ENCODE measurements at regions of chr19 and their contacts with region 1.

Region 1: DNA sequence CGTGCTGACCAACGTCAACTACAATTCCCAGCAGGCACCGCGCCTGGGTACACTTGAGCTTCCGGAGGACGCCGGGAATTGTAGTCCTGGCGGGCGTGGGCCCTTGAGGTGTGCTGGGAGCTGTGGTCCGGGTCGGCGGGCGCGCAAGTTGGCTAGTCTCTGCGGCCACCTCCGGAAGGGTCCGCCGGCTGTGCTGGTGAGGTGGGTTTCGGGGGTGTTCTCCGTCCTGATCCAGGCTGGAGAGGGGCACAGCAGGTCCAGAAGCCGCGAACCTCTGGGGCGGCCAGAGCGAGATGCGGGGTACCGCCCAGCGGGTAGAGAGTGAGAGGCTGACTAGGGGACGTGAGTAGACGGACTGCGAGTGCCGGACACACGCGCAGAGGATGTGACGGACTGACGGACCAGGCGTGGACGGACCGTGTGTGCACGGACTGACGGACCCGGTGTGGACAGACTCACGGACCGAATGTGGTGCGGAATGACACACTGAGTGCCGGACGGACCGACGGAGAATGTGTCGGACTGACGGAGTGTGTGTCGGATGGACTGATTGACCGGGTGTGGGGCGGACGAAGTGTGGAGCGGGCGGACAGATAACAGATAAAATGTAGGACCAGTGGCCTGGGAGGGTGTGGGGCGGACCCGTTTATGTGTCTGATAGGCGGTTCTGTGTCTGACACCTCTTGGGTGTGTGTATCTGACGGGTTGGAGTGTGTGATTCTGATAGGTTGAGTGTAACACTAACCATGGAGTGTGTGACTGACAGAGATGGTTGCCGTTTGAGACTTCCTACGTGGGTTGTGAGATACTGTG is at the start of gene ZSCAN22:
- DNase-seq: peak; percentile 97
- H3K4me3 ChIP-seq: peak within 1 kb of the TSS; percentile 56 to 100 (median 86)
- H3K27ac ChIP-seq: peak within 1 kb of the TSS; percentile 65
- H3K4me1 ChIP-seq: peaks cover 28% of the 10 kb centered on the region
- H3K27me3 ChIP-seq: no peaks in the 10 kb centered on the region
- CTCF ChIP-seq: no peak
- total RNA-seq, gene ZSCAN22: 3.2 to 3.7 TPM

Region 2: DNA sequence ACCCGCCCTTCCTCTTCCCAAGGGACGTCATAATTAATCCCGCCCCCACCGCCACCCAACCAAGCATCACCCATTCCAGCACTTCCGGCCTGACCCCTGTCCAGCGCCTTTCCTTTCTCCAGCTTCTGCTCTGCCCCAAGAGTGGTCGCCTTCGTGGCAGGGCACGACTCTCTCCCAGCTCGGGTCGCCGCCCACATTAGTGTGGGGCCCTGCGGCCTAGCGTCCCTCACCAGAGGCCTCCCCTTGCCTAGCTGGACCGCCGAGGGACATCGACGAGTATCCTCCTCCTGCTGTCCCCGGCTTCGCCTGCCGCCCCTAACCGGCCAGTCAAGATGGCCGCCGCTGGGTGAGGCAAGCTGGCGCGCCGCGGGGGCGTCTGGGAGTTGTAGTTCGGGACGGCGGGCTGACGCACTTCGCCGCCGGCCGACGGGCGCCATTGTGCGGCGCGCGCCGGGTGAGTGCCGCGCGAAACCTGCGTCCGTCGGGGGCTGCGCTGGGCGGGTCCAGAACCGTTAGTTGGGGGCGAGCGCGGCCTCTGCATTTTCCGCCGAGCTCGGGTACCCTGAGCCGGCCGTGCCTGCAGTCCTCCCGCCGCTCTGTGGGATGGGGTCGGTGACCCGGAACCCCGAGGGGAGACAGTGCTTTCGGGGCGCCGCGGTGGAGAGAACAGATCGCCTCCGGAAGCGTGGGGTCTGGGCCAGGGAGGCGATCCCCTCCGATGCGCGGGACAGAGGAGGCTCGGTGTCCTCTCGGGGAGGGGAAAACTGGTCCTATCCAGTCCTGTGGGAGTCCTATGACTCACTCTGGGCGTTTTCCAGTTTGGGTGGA is 143.9 kb before region 1 on chr19 and contains the start of gene ZNF274:
- CTCF ChIA-PET with region 1: no interaction called
- dilution Hi-C with region 1: no loop called
- in situ Hi-C with region 1: no loop called
- intact Hi-C with region 1: loop called (anchors 5 kb)
- DNase-seq: peak; percentile 90
- H3K4me3 ChIP-seq: peak within 1 kb of the TSS; percentile 81 to 97 (median 83)
- H3K27ac ChIP-seq: peak within 1 kb of the TSS; percentile 93
- H3K4me1 ChIP-seq: peaks cover 3% of the 10 kb centered on the region
- H3K27me3 ChIP-seq: no peaks in the 10 kb centered on the region
- CTCF ChIP-seq: no peak
- total RNA-seq, gene ZNF274: 15.7 to 33.8 TPM

Region 3: GRCh38 chr19:58278157-58279041 is 48.7 kb before region 1 on chr19 and contains the start of gene ZNF8:
- CTCF ChIA-PET with region 1: no interaction called
- dilution Hi-C with region 1: no loop called
- in situ Hi-C with region 1: no loop called
- intact Hi-C with region 1: loop called (anchors 2 kb)
- DNase-seq: peak; percentile 99
- H3K4me3 ChIP-seq: peak within 1 kb of the TSS; percentile 73 to 93 (median 82)
- H3K27ac ChIP-seq: peak within 1 kb of the TSS; percentile 80
- H3K4me1 ChIP-seq: peaks cover 10% of the 10 kb centered on the region
- H3K27me3 ChIP-seq: no peaks in the 10 kb centered on the region
- CTCF ChIP-seq: peak in 1 of 2 donors; percentile 16
- total RNA-seq, gene ZNF8: 6.0 to 10.2 TPM

Region 4: GRCh38 chr19:58362272-58362994 is 35.3 kb after region 1 on chr19 and contains the start of gene ZNF497:
- CTCF ChIA-PET with region 1: no interaction called
- dilution Hi-C with region 1: no loop called
- in situ Hi-C with region 1: no loop called
- intact Hi-C with region 1: loop called (anchors 2 kb)
- DNase-seq: peak; percentile 94
- H3K4me3 ChIP-seq: peak within 1 kb of the TSS; percentile 61 to 83 (median 64)
- H3K27ac ChIP-seq: peak within 1 kb of the TSS; percentile 84
- H3K4me1 ChIP-seq: peaks cover 8% of the 10 kb centered on the region
- H3K27me3 ChIP-seq: no peaks in the 10 kb centered on the region
- CTCF ChIP-seq: no peak
- total RNA-seq, gene ZNF497: 0.83 to 1.1 TPM

Region 5: GRCh38 chr19:58386576-58387337 is 59.6 kb after region 1 on chr19 and contains the start of gene RPS5:
- CTCF ChIA-PET with region 1: no interaction called
- dilution Hi-C with region 1: no loop called
- in situ Hi-C with region 1: no loop called
- intact Hi-C with region 1: loop called (anchors 1 kb)
- DNase-seq: peak; percentile 98
- H3K4me3 ChIP-seq: peak within 1 kb of the TSS; percentile 72 to 86 (median 85)
- H3K27ac ChIP-seq: peak within 1 kb of the TSS; percentile 82
- H3K4me1 ChIP-seq: peaks cover 28% of the 10 kb centered on the region
- H3K27me3 ChIP-seq: no peaks in the 10 kb centered on the region
- CTCF ChIP-seq: no peak
- total RNA-seq, gene RPS5: 916 to 1,060 TPM

Region 6: DNA sequence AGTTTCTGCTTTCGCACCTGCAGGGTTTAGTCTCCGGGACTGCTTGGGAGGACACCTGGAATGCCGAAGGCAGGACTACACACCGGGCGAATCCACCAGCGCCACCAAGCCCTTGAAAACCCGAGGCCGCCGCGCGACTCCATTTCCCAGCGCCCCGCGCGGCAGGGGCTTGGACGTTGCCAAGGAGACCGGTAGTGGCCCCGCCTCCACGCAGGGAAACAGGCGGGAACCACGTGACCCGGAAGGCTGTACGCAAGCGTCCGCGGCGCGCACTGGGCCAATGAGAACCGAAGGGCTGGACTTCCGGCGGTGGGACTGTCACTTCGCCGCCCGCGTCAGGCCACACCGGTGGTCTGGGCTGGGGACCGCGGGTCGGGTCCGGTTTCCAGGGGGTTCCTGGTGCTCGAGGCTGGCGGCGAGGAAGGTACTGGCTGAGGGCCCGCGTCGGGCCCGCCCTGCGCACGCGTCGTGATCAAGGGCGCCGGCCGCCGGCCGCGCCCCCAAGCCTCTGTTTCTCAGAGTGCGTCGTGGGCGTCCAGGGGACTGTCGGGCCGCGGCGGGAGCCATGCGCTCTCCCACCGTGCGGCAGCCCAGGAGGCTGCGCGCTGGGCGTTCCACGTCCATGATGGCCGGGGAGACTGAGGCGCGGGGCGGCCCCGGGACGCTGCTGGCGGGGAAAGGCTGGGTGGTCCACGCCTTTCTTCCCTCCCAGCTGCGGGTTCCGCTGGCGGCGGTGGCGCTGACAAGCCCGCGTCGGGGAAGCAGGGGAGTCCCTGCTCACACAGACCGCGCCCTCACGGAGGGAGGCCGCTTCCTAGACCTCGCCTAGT is 139.9 kb after region 1 on chr19 and contains the start of gene ZNF324:
- CTCF ChIA-PET with region 1: no interaction called
- dilution Hi-C with region 1: no loop called
- in situ Hi-C with region 1: no loop called
- intact Hi-C with region 1: loop called (anchors 2 kb)
- DNase-seq: peak; percentile 96
- H3K4me3 ChIP-seq: peak within 1 kb of the TSS; percentile 70 to 96 (median 79)
- H3K27ac ChIP-seq: peak within 1 kb of the TSS; percentile 66
- H3K4me1 ChIP-seq: peaks cover 15% of the 10 kb centered on the region
- H3K27me3 ChIP-seq: no peaks in the 10 kb centered on the region
- CTCF ChIP-seq: peak in 1 of 2 donors; percentile 20
- total RNA-seq, gene ZNF324: 12.7 to 28.7 TPM